Motor neuron (in vitro differentiated cells): ENCODE measurements at regions of chr5 and their contacts with region 1.

Region 1: DNA sequence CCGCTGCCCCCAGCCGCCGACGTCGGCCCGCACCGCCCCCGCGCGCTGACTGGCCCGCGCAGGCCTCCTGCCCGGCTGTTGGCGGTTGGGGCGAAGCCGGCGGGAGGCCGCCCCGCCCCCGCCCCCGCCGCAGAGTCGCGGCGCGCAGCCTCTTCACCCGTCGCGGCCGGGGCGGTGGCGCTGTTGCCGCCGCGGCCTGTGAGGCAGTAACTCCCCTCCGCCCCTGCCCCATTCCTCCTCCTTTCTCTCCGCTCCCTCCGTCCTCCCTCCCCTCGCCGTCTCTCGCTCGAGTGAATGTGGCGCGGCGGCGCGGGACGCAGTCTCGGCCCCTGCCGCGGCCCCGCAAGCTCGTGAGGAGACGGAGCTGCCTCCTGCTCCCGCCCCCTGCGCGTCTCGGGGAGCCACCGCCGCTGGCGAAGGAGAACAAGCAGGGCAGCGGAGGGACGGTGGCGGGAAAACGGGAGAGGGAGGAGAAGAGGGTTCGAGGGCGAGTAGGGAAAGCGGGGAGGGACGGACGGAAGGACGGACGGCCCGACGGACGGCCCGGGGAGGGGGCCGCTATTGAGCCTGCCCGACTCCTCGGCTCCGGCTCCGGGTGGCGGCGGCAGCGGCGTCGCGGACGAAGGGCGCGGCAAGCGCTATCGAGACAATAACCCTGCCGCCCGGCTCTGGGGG is 637 bp upstream of the ERBIN start:
- ATAC-seq: peak; percentile 72 to 92 (median 90)
- H3K4me3 ChIP-seq: peak overlapping the region; percentile 71 to 77 (median 72)
- H3K27ac ChIP-seq: peak overlapping the region; percentile 95 to 97
- H3K4me1 ChIP-seq: peaks cover 0 to 12% of the 10 kb centered on the region in 2 donors

Region 2: DNA sequence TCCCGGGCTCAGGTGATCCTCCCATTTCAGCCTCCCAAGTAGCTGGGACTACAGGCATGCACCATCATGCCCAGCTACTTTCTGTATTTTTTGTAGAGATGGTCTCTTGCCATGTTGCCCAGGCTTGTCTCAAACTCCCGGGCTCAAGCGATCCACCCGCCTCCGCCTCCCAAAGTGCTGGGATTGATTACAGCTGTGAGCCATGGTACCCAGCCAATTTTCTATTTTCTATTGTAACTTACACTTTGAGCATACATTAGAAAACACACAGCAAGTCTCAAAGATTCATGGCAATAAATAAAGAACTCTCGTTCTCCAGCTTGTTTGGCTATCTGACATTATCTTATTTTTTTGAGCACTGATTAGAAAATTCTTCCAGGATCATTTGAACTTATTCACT is 672.8 kb before region 1 on chr5:
- in situ Hi-C with region 1: no loop called
- ATAC-seq: no peak
- H3K4me3 ChIP-seq: no peak overlapping the region
- H3K27ac ChIP-seq: no peak overlapping the region
- H3K4me1 ChIP-seq: no peaks in the 10 kb centered on the region

Region 3: DNA sequence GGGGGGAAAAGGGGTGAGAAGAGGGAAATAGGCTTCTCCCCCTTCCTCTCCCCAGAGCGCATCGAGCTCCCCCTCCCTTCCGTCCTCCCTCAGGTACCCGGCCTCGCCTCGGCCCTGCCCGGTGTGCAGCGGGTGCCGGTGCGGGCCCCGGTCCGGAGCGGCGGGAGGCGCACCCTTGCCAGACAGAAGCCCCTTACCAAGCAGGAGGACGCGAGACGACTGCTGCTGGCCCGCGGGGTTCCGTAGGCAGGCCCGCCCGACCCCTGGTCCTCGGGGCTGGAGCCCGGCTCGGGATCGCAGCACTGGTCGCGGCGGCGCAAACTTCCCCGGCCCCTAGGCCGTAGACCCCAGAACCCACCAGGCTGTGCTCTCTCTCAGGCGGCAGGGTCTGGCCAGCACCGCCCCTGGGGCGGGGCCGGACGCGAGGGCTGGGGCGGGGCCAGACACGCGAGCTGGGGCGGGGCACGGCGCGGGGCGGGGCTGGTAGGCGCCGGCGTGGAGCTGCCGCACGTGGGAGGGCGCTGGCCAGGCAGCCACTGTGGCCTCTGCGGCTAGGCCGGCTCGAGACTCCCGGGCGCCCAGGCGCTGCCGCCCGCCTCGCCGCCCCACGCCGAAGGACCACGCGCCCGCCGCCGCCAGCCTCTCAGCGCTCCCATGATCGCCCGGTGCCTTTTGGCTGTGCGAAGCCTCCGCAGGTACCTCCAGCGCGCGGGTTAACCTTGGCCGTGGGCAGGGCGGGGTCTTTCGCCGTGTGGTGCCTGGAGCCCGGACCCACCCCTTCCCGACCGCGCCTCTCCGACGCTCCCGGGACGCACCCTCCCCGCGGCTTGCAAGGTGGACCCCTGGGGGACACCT is 203.8 kb before region 1 on chr5 and contains the starts of genes NLN and SGTB:
- in situ Hi-C with region 1: loop called in 3 of 9 experiments (anchors 25 kb)
- ATAC-seq: peak; percentile 82 to 94 (median 92)
- H3K4me3 ChIP-seq: peak within 1 kb of the TSS; percentile 72 to 93 (median 80)
- H3K27ac ChIP-seq: peak within 1 kb of the TSS; percentile 77 to 82
- H3K4me1 ChIP-seq: peaks cover 7 to 11% of the 10 kb centered on the region in 2 donors
- total RNA-seq, gene NLN: 9.2 to 24.6 (median 21.3) TPM
- total RNA-seq, gene SGTB: 2.8 to 35.3 (median 13.4) TPM

Region 4: GRCh38 chr5:65742565-65743231 is 183.0 kb before region 1 on chr5:
- in situ Hi-C with region 1: loop called in 2 of 9 experiments (anchors 25 kb)
- ATAC-seq: peak in 5 of 8 experiments; percentile 33 to 87 (median 75)
- H3K4me3 ChIP-seq: no peak overlapping the region
- H3K27ac ChIP-seq: no peak overlapping the region
- H3K4me1 ChIP-seq: peaks cover 0 to 3% of the 10 kb centered on the region in 2 donors